Right ventricle myocardium inferior (tissue), 1 donor: ENCODE measurements at regions of chr21 and their contacts with region 1.

Region 1: GRCh38 chr21:46048926-46049889 is 48.7 kb upstream of the COL6A2 start:
- DNase-seq: peak; percentile 89
- ATAC-seq: peak; percentile 96

Region 2: DNA sequence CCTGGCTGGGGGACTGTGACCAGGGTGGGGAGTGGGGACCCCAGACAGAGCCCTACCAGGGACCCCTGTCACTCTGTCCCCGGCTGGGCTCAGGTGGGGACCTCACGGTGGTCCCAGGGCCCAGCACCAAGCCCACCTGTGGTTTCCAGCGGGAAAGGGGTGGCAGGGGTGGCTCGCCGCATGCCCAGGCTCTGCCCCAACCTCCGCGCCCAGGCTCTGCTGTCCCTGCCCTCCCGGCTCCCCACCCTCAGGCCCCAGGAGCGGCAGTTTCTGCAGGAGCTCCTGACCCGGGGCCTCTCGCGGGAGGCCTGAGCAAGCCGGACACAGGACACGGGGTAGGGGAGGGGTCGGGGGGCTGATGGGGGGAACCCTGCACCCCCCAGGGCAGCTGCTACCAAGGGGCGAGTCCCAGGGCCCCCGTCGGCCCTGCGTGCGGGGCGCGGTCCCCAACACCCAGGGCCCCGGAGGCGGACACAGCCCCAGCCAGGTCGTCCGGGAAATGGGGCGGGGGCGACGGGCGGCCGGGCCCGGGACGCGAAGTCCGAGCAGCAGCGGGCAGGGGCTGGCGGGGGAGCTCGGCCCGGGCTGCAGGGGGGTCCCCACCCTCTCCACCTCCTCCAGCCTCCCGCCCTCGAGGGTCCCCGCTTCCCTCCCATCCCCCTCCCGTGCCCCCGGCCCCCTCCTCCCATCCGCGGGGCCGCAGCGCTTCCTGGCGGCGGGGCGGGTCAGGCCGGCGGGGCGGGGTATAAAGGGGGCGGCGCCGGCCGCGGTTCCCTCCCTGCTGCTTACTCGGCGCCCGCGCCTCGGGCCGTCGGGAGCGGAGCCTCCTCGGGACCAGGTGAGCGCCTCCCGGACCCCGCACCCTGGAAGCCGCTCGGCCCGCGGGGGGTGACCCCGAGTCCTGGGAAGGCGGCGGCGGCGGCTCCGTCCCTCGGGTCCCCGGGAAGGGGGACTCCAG is 48.4 kb after region 1 on chr21 and contains the start of gene COL6A2:
- intact Hi-C with region 1: loop called (anchors 10 kb)
- DNase-seq: peak; percentile 85
- ATAC-seq: peak; percentile 86
- total RNA-seq, gene COL6A2: 254 TPM

Region 3: DNA sequence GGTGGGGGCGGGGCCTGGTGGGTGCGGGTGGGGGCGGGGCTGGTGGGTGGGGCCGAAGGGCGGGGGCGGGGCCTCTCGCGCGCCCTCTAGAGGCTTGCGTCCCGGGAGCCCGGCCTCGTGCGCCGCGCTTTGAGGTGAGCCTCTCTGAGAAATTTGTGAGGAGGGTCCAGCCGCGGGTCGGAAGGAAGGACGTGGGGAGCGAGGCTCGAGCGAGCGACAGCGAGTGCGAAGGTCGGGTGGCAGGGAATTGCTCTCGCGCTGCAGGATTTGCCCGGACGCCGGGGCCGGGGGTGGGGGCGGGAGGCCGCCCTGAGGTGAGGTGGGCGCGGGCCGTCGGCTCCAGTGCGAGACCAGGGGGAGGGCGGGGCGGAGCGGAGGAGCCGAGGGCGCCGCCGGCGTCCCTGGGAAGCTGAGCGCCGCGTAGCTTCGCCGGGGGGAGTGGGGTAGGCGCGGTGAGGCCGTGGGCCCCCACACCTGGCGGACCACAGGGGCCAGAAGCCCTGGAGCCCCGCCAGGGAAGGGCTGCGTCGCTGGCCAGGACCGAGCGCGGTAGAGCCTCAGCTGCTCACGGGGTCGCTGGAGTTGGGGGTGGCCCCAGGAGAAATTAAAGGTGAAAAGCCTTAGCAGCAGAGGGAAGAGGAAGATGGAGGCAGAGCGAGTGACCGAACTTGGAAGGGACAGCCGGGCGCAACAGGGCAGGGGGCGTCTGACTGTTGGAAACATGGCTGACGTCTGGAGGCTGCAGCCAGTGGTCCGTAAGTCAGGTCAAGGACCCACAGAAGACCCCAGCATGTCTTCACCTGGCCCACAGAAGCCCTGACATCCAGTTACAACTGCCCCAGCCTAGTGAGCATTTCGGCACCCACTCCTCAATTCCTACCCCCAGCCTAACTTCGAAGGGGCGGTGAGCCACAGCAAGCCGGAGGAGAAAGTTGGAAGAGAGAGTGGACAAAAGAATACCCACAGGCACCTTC is 180.2 kb after region 1 on chr21:
- intact Hi-C with region 1: no loop called
- DNase-seq: no peak
- ATAC-seq: peak; percentile 26

Region 4: GRCh38 chr21:46253610-46254124 is 204.5 kb after region 1 on chr21:
- intact Hi-C with region 1: no loop called
- DNase-seq: no peak
- ATAC-seq: no peak